Panc1 (cell line): ENCODE measurements at regions of chrX and their contacts with region 1.

Region 1: DNA sequence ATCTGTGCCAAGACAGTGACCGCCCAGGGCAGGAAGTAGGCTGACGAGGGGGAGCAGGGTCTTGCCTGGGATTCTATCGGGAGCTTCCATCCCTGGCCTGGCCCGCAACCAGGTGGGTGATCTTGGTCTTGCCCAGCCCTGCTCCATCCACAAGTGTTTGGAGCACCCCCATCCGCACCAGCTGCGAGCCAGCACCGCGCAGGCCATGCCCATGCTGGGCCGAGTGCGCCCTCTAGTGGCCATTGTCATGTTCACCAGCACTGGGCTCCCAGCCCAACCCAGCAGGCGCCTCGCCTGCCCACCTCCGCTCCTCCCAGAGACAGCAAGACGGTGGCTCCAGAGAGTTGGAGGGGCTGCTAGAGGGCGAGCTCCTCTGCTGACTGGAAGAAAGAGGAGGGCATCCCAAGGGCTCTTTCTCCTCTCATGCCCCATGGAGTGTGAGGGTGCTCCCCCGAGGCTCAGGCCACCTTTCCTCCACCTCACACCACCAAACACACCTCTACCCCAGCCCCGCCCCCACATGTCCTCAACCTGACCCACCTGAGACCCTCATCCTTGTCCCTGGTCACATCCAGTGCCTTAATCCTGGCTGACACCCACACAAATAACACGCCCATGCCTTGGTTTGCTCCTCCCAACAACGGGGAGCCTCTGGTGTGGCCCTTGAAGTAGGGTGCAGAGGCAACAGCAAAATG is 9.8 kb upstream of the ATP2B3 start:
- DNase-seq: peak; percentile 12
- ATAC-seq: peak; percentile 96
- H3K4me3 ChIP-seq: peak overlapping the region in 1 of 2 experiments; percentile 17; a peak in 2 of 4 replicates
- H3K27ac ChIP-seq: 0 out of 2 replicates have a peak overlapping the region, but pooled peaks have one; percentile 7
- H3K4me1 ChIP-seq: no peaks in the 10 kb centered on the region
- H3K27me3 ChIP-seq: no peaks in the 10 kb centered on the region
- CTCF ChIP-seq: no peak

Region 2: DNA sequence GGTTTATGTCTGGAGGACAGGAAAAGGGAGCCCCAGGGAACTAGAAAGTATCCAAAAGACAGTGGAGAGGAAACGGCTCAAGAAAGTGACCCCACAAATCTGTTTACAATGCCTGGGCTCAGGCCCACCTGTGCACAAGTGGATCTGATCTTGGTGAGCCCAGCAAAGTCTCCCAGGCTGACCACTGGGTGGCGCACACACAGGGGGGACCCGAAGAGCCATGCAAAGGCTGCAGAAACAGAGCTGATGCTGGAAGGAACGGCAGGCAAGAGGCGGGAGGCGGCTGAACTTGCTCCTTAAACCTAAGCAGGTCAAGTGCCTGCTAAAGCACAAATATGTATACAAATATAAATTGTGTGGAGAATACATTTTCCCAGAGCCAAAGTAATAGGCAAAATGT is 46.8 kb before region 1 on chrX:
- CTCF ChIA-PET with region 1: interaction called, 14 read pairs
- POLR2A ChIA-PET with region 1: no interaction called
- in situ Hi-C with region 1: no loop called
- intact Hi-C with region 1: loop called (anchors 1 kb)
- DNase-seq: no peak
- ATAC-seq: peak; percentile 89
- H3K4me3 ChIP-seq: no peak overlapping the region
- H3K27ac ChIP-seq: no peak overlapping the region
- H3K4me1 ChIP-seq: no peaks in the 10 kb centered on the region
- H3K27me3 ChIP-seq: no peaks in the 10 kb centered on the region
- CTCF ChIP-seq: no peak